ENCODE measurements at regions of chr4 and their contacts with region 1.

Region 1: GRCh38 chr4:103934178-103934789 is 214.5 kb upstream of the TACR3 start:
- DNase-seq: peak; percentile 30
- H3K4me3 Mint-ChIP-seq: no peak overlapping the region
- H3K27ac Mint-ChIP-seq: no peak overlapping the region
- H3K4me1 Mint-ChIP-seq: no peaks in the 10 kb centered on the region
- H3K27me3 Mint-ChIP-seq: no peaks in the 10 kb centered on the region

Region 2: DNA sequence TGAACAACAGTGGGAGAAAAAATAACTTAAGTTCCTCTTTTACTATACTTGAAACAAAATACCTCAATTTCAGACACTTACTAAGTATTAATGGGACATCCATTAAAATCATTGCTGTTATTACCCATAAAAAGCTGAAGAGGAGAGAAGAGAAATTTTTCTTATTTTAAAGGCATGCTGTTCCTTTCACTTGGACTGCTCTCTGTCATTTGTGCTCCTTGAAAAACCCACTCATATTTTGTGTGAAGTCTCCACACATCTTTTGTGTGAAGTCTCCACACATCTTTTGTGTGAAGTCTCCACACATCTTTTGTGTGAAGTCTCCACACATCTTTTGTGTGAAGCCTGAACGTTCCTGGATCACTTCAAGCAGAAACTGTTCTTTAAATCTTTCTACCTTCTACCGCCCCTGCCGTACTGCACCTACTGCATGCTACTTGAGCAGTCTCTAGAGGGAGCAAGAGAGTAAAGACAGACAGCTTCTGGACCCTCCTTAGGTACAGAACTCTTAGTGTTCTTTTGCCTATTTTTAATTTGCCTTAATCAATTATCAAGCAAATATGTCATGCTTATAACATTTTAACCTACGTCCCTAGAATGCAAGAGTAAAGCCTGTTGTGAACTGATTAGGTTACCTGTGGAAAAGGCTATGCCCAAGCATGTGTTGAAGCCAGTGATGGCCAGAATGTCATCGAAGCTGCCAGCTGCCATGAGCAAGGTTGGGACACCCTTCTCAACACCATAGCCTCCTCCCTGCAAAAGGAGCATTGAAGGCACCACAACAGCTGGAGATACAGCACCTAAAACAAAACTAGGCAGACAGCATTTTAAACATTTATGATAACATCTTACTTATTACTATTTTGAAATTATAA is 887.6 kb before region 1 on chr4:
- CTCF ChIA-PET with region 1: no interaction called
- intact Hi-C with region 1: loop called (anchors 5 kb)
- DNase-seq: peak; percentile 42
- H3K4me3 Mint-ChIP-seq: no peak overlapping the region
- H3K27ac Mint-ChIP-seq: no peak overlapping the region
- H3K4me1 Mint-ChIP-seq: peaks cover 10% of the 10 kb centered on the region
- H3K27me3 Mint-ChIP-seq: no peaks in the 10 kb centered on the region

Region 3: DNA sequence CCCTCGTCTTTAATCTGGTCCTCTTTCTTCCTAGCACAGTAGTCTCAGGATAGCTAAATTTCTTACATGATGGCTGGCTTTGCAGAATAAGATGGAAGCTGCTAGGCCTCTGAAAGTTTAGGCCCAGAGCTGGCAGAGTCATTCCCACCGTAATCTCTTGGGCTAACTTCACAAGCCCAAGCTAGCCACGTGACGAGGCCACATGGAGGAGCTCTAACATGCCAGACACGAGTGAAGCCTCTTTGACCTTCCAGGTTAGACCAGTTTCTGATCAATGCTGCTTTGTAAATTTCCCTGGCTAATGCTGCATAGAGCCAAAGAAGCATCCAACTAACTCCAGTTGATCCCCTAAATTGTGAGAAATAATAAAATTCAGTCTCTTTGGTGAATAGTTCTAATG is 726.6 kb before region 1 on chr4:
- CTCF ChIA-PET with region 1: no interaction called
- intact Hi-C with region 1: loop called (anchors 5 kb)
- DNase-seq: no peak
- H3K4me3 Mint-ChIP-seq: no peak overlapping the region
- H3K27ac Mint-ChIP-seq: no peak overlapping the region
- H3K4me1 Mint-ChIP-seq: no peaks in the 10 kb centered on the region
- H3K27me3 Mint-ChIP-seq: no peaks in the 10 kb centered on the region

Region 4: DNA sequence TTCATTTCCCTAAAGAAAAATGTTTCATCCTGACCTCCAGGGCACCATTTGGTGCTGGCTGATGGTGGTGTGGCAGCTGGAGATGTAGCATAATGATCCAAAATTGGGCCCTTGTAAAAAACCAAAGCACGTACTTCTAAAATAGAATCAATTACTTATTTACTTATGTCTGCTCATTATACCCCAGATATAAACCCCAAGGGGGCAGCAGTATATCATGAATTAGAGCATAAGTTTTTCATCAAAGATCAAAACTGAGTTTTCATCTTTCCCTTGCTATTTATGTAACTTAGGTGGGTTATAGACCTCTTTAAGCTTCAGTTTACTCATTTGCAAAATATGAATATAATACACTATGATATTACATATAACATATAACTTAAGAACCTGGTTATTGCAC is 455.6 kb before region 1 on chr4:
- CTCF ChIA-PET with region 1: no interaction called
- intact Hi-C with region 1: loop called (anchors 1 kb)
- DNase-seq: no peak
- H3K4me3 Mint-ChIP-seq: no peak overlapping the region
- H3K27ac Mint-ChIP-seq: no peak overlapping the region
- H3K4me1 Mint-ChIP-seq: no peaks in the 10 kb centered on the region
- H3K27me3 Mint-ChIP-seq: no peaks in the 10 kb centered on the region

Region 5: GRCh38 chr4:104451573-104451972 is 517.3 kb after region 1 on chr4:
- CTCF ChIA-PET with region 1: no interaction called
- intact Hi-C with region 1: no loop called
- DNase-seq: no peak
- H3K4me3 Mint-ChIP-seq: no peak overlapping the region
- H3K27ac Mint-ChIP-seq: no peak overlapping the region
- H3K4me1 Mint-ChIP-seq: no peaks in the 10 kb centered on the region
- H3K27me3 Mint-ChIP-seq: no peaks in the 10 kb centered on the region

Measured in activated naive CD4-positive, alpha-beta T cell treated with anti-CD3 and anti-CD28 coated beads for 36 hours (primary cell).